CD8-positive, alpha-beta memory T cell (primary cell): ENCODE measurements at regions of chr15 and their contacts with region 1.

Region 1: DNA sequence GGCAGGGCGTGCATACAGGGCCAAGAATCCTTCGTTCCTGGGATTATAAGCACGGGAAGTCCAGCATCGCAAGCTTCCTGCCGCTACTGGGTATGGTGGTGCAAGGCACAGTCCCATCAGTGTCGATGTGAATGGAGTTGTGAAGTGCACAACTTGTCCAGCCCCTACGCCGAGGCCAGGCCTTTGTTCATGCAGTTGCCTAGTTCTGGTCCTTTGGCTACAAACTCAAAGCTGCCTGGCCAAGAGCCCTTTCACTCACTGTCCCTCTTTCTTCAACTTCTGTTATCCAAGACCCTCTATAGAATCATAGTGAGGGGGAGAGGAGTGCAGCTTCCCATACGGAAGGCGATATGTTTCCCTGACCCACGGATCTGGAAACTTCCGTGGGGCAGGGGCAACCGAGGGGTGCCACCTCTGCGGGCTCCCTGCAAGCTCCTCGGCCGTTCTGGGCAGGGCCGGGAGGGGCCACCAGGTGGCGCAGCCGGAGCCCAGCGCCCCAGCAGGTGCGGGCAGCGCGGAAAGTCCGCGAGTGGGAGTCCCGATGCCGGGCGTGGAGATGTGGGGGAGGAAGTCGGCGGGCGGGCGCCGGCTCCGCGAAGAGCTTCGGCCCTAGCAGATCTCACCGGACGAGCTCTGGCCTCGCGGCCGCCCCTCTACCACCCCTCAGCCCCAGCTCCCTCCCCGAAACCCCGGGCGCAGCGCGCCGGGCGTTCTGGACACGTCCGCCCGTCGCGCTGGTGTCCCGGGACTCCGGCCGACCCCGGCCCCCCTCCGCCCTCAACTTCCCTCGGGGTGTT is 693 bp downstream of the RASGRP1 start:
- DNase-seq: peak; percentile 80 to 89 (median 83)
- H3K4me3 ChIP-seq: peak overlapping the region; percentile 90
- H3K4me3 Mint-ChIP-seq: peak overlapping the region; percentile 96 to 99 (median 97)
- H3K27ac ChIP-seq: peak overlapping the region; percentile 80
- H3K27ac Mint-ChIP-seq: peak overlapping the region; percentile 82 to 98 (median 90)
- H3K4me1 ChIP-seq: peaks cover 57% of the 10 kb centered on the region
- H3K4me1 Mint-ChIP-seq: peaks cover 60 to 63% (median 62%) of the 10 kb centered on the region in 3 donors
- H3K27me3 ChIP-seq: no peaks in the 10 kb centered on the region
- H3K27me3 Mint-ChIP-seq: no peaks in the 10 kb centered on the region

Region 2: GRCh38 chr15:38378161-38378560 is 185.8 kb before region 1 on chr15:
- CTCF ChIA-PET with region 1: no interaction called
- POLR2A ChIA-PET with region 1: no interaction called
- DNase-seq: no peak
- H3K4me3 ChIP-seq: no peak overlapping the region
- H3K4me3 Mint-ChIP-seq: no peak overlapping the region
- H3K27ac ChIP-seq: no peak overlapping the region
- H3K27ac Mint-ChIP-seq: no peak overlapping the region
- H3K4me1 ChIP-seq: no peaks in the 10 kb centered on the region
- H3K4me1 Mint-ChIP-seq: no peaks in the 10 kb centered on the region
- H3K27me3 ChIP-seq: no peaks in the 10 kb centered on the region
- H3K27me3 Mint-ChIP-seq: peaks cover 29 to 57% of the 10 kb centered on the region in 2 donors

Region 3: GRCh38 chr15:38479266-38479665 is 84.7 kb before region 1 on chr15:
- CTCF ChIA-PET with region 1: interaction called, 12 read pairs
- POLR2A ChIA-PET with region 1: interaction called, 3 read pairs
- DNase-seq: no peak
- H3K4me3 ChIP-seq: no peak overlapping the region
- H3K4me3 Mint-ChIP-seq: no peak overlapping the region
- H3K27ac ChIP-seq: no peak overlapping the region
- H3K27ac Mint-ChIP-seq: peak overlapping the region in 2 of 8 donors; percentile 26 to 27
- H3K4me1 ChIP-seq: peaks cover 26% of the 10 kb centered on the region
- H3K4me1 Mint-ChIP-seq: peaks cover 35 to 42% (median 39%) of the 10 kb centered on the region in 3 donors
- H3K27me3 ChIP-seq: no peaks in the 10 kb centered on the region
- H3K27me3 Mint-ChIP-seq: no peaks in the 10 kb centered on the region

Region 4: GRCh38 chr15:38576837-38577236 is 12.9 kb after region 1 on chr15:
- CTCF ChIA-PET with region 1: interaction called, 17 read pairs
- POLR2A ChIA-PET with region 1: interaction called, 3 read pairs
- DNase-seq: peak in 3 of 5 donors; percentile 17 to 63 (median 50)
- H3K4me3 ChIP-seq: no peak overlapping the region
- H3K4me3 Mint-ChIP-seq: peak overlapping the region; percentile 3 to 73 (median 66)
- H3K27ac ChIP-seq: peak overlapping the region; percentile 27
- H3K27ac Mint-ChIP-seq: peak overlapping the region; percentile 81 to 94 (median 90)
- H3K4me1 ChIP-seq: peaks cover 34% of the 10 kb centered on the region
- H3K4me1 Mint-ChIP-seq: peaks cover 39 to 58% (median 41%) of the 10 kb centered on the region in 3 donors
- H3K27me3 ChIP-seq: no peaks in the 10 kb centered on the region
- H3K27me3 Mint-ChIP-seq: no peaks in the 10 kb centered on the region

Region 5: GRCh38 chr15:38618242-38618955 is 54.5 kb after region 1 on chr15:
- CTCF ChIA-PET with region 1: interaction called, 10 read pairs
- POLR2A ChIA-PET with region 1: no interaction called
- DNase-seq: no peak
- H3K4me3 ChIP-seq: no peak overlapping the region
- H3K4me3 Mint-ChIP-seq: no peak overlapping the region
- H3K27ac ChIP-seq: no peak overlapping the region
- H3K27ac Mint-ChIP-seq: peak overlapping the region in 1 of 8 donors; percentile 14
- H3K4me1 ChIP-seq: peaks cover 5% of the 10 kb centered on the region
- H3K4me1 Mint-ChIP-seq: peaks cover 17 to 24% (median 22%) of the 10 kb centered on the region in 3 donors
- H3K27me3 ChIP-seq: no peaks in the 10 kb centered on the region
- H3K27me3 Mint-ChIP-seq: no peaks in the 10 kb centered on the region

Region 6: DNA sequence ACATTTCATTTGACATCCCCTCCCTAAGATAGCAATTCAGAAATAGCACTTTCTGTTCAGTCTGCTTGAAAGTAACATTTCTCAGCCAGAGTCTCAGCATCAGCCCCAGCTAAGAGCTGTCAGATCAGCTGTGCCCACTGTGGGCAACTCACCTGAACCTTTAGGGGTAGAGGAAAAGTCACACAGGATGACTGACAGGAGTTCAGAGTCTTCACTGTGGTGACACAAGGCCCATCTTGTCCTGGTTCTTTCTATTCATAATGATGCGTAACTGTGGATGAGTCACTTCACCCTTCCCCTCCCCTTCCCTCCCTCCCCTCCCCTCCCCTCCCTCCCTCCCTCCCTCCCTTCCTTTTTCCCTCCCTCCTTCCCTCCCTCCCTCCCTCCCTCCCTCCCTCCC is 96.8 kb after region 1 on chr15:
- CTCF ChIA-PET with region 1: interaction called, 45 read pairs
- POLR2A ChIA-PET with region 1: interaction called, 3 read pairs
- DNase-seq: peak in 2 of 5 donors; percentile 18 to 59
- H3K4me3 ChIP-seq: no peak overlapping the region
- H3K4me3 Mint-ChIP-seq: peak overlapping the region in 5 of 7 donors; percentile 3 to 54 (median 27)
- H3K27ac ChIP-seq: no peak overlapping the region
- H3K27ac Mint-ChIP-seq: peak overlapping the region in 7 of 8 donors; percentile 38 to 95 (median 82)
- H3K4me1 ChIP-seq: peaks cover 68% of the 10 kb centered on the region
- H3K4me1 Mint-ChIP-seq: peaks cover 40 to 74% (median 59%) of the 10 kb centered on the region in 3 donors
- H3K27me3 ChIP-seq: no peaks in the 10 kb centered on the region
- H3K27me3 Mint-ChIP-seq: no peaks in the 10 kb centered on the region

Region 7: GRCh38 chr15:38683382-38684242 is 119.7 kb after region 1 on chr15:
- CTCF ChIA-PET with region 1: interaction called, 213 read pairs
- POLR2A ChIA-PET with region 1: interaction called, 55 read pairs
- DNase-seq: peak; percentile 49 to 80 (median 67)
- H3K4me3 ChIP-seq: no peak overlapping the region
- H3K4me3 Mint-ChIP-seq: peak overlapping the region; percentile 5 to 71 (median 40)
- H3K27ac ChIP-seq: no peak overlapping the region
- H3K27ac Mint-ChIP-seq: peak overlapping the region; percentile 12 to 97 (median 91)
- H3K4me1 ChIP-seq: peaks cover 64% of the 10 kb centered on the region
- H3K4me1 Mint-ChIP-seq: peaks cover 66 to 74% (median 71%) of the 10 kb centered on the region in 3 donors
- H3K27me3 ChIP-seq: no peaks in the 10 kb centered on the region
- H3K27me3 Mint-ChIP-seq: no peaks in the 10 kb centered on the region

Region 8: GRCh38 chr15:38724827-38725226 is 160.9 kb after region 1 on chr15:
- CTCF ChIA-PET with region 1: no interaction called
- POLR2A ChIA-PET with region 1: no interaction called
- DNase-seq: no peak
- H3K4me3 ChIP-seq: no peak overlapping the region
- H3K4me3 Mint-ChIP-seq: no peak overlapping the region
- H3K27ac ChIP-seq: no peak overlapping the region
- H3K27ac Mint-ChIP-seq: no peak overlapping the region
- H3K4me1 ChIP-seq: no peaks in the 10 kb centered on the region
- H3K4me1 Mint-ChIP-seq: no peaks in the 10 kb centered on the region
- H3K27me3 ChIP-seq: no peaks in the 10 kb centered on the region
- H3K27me3 Mint-ChIP-seq: peaks cover 0 to 3% of the 10 kb centered on the region in 2 donors